ENCODE measurements at regions of chr2 and their contacts with region 1.

Region 1: DNA sequence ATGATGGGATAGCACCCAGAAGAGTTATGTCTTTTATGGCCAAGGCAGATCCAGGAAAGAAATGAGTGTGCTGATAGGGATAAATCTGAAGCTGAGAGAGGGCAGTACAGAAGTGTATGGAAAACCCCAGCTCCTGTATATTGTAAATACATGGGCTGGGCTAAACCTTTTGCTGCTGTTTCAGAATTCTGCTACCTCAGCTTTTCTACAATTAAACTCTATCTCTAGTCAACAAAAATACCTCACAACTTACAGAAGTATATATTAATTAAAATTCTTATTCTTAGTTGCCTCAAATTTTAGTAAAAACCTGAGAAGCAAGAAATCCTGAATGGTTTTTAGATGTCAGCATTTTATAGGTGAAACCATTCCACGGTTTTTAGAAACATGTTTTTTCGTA is 889.5 kb upstream of the NXPH2 start:
- DNase-seq: no peak
- ATAC-seq: no peak
- H3K4me3 ChIP-seq: no peak overlapping the region
- H3K4me1 ChIP-seq: peaks cover 10% of the 10 kb centered on the region
- CTCF ChIP-seq: no peak

Region 2: DNA sequence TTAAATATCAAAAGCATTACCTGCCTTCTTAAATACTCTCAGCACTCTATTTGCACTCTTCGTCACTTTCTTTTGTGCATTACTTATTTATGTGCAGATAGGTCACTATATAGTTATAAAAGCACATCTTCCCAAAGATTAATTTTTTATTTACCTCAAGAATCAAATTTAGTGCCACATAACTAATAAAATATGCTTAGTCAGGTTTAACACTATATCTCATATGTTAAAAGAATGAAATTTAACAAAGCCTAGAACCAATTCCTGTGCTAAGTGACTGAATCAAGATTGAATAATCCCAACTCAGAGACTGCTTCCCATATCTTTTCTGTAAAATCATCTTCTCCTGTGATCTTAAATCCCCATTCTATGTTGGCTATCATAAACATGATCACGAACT is 68.0 kb after region 1 on chr2:
- intact Hi-C with region 1: no loop called
- DNase-seq: no peak
- ATAC-seq: no peak
- H3K4me3 ChIP-seq: no peak overlapping the region
- H3K4me1 ChIP-seq: no peaks in the 10 kb centered on the region
- CTCF ChIP-seq: no peak

Region 3: DNA sequence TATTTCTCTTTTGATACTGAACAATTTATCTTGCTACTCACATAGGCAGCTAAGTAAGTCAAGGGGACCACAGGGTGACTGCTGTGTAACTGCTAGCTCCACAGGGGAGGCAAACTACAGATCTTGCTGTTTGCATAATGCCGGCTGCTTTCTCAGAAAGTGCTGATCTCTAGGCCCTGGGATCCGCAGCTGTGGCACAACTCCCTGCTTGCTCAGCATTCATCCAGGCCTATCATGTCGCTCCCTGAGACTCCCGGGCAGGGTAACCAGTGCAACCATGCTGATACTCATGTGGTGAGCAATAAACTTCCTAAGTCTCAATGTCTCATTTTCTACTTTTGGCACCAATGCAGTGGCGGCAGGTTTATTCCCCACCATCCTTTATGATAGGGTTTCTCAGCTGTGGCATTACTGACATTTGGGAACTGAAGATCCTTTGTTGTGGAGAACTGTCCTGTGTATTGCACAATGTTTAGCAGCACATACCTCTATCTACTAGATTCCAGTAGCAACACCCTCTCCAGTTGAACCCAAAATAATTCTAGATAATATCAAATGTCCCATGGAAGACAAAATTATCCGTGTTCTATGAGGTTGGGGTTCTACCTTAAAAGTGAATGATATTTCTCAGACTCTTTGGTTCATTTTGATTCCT is 1359.9 kb after region 1 on chr2:
- intact Hi-C with region 1: loop called in 1 of 2 experiments (anchors 5 kb)
- DNase-seq: no peak
- ATAC-seq: no peak
- H3K4me3 ChIP-seq: no peak overlapping the region
- H3K4me1 ChIP-seq: no peaks in the 10 kb centered on the region
- CTCF ChIP-seq: no peak